ENCODE measurements at regions of chrX and their contacts with region 1.

Region 1: DNA sequence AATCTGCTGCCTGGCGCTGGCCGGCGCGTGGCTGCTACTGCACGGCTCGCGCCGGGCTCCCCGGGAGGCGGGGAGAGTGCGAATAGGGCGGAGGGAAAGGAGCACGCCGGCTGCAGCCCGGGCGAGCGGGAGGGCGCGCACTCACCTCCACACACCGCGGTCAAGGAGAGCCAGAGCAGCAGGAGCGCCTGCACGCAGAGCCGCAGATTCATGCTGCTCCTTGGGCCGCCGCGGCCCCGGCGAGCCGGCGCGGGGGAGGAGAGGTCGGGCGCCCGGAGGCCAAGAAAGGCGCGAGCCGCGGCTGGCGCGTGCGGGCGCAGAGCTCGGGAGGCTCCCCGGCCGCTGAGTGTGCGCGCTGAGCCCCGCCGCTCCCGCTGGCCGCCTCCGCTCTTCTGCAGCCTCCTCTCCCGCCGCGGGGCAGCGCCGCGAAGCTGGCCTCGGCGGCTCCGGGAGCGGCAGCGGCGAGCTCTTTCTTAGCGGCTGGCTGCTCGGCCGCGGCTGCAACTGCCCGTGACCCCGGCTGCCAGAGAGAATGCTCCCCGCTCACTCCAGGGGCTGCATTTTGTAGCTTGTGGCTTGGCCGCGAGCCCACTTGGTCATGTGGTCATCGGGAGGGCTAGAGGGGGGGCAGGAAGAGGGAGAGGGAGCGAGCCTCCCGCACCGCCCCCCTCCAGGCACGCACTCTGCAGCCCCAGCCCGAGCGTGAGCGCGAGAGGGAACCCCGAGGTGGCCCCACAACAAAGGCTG is at the start of gene APLN:
- DNase-seq: peak in 8 of 10 donors; percentile 44 to 93 (median 56)

Region 2: DNA sequence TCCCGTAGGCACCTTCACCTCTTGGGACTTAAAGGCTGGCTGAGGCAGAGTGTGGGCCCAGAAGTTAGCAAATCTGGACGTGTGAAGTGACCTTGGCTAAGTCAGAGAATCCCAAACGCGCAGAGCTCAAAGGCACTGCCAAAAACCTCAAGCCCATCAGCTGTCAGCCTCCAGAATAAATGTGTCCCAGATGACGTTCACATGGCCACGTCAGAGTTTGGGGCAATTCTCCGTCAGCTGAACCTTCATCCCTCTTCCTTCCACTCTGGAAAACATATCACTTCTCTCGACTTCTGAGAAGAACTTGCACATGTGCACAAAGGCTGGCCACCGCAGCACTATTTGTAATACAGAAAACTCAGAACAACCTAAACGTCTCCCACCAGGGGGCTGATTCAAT is 35.8 kb after region 1 on chrX:
- intact Hi-C with region 1: loop called (anchors 1 kb)
- DNase-seq: peak in 1 of 10 donors; percentile 39

Measured in posterior cingulate gyrus (tissue), 11 donors.